ENCODE measurements at regions of chr14 and their contacts with region 1.

Region 1: DNA sequence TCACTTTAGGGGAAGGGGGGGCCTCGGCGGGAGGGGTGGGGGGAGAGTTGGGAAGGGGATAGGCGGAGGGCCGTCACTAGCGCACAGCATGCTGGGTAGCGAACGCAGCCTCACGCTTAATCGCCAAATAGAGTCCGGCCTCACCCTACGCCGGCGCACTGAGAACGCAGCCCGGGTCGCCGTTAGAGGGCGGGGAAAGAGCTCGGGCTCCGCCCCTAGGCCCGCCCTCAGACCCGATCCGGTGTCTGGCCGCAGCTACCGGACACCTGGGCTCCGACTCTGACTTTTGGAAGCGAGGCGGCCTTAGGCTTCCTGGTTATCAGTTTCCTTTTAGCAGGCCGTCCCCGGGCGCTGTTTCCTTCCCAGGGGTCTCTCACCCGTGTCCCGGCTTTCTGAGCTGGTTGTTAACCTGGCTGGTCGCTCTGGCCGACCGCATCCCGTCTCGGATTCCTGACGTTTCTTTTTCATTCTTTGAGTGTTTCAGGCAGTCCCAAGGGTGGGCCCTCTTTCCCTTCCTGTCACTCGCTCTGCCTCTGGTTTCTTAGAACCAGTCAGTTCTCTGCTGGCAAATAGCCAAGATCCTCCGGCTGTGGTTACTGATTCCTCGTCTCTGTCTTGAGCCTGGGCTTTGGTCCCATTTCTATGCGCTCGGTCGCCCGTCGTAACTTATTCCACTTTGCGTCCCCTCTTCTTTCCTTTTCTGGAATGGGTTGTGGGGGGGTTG is 378 bp upstream of the STRN3 start:
- DNase-seq: peak; percentile 75 to 96 (median 88)
- ATAC-seq: peak; percentile 88
- H3K4me3 ChIP-seq: peak overlapping the region; percentile 77 to 99
- H3K4me3 Mint-ChIP-seq: peak overlapping the region; percentile 97
- H3K27ac ChIP-seq: peak overlapping the region; percentile 79 to 93
- H3K27ac Mint-ChIP-seq: peak overlapping the region; percentile 94
- H3K4me1 ChIP-seq: peaks cover 25% of the 10 kb centered on the region
- H3K4me1 Mint-ChIP-seq: peaks cover 47% of the 10 kb centered on the region
- H3K27me3 ChIP-seq: no peaks in the 10 kb centered on the region
- H3K27me3 Mint-ChIP-seq: no peaks in the 10 kb centered on the region
- CTCF ChIP-seq: no peak

Region 2: DNA sequence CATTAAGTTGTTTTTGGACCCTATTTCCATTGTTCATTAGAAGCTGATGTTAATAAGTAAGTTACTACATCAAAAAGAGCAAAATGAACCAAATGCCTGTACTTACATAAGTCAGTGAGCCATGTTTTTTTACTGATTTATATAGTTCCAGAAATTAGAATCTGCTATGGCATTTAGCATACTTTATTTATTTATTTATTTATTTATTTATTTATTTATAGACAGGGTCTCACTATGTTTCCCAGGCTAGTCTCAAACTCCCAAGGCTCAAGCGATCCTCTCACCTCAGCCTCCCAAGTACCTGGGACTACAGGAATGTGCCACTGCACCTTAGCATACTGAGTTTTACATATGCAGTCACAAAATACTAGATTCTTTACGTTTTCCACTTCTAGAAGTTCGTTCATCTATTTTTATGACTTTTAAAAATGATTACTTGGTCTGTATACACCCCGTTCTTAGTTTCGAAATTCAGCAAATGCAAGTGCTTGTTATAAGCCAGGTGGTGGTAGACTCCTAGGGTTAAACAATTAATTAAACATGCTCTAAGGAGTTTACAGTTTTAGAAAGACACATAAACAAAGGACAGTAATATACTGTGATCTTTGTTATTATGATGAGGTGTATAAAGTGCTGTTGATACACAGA is 334.7 kb before region 1 on chr14:
- CTCF ChIA-PET with region 1: no interaction called
- POLR2A ChIA-PET with region 1: no interaction called
- intact Hi-C with region 1: loop called in 1 of 2 experiments (anchors 5 kb)
- DNase-seq: no peak
- ATAC-seq: no peak
- H3K4me3 ChIP-seq: no peak overlapping the region
- H3K4me3 Mint-ChIP-seq: no peak overlapping the region
- H3K27ac ChIP-seq: peak overlapping the region in 1 of 2 experiments; percentile 79
- H3K27ac Mint-ChIP-seq: peak overlapping the region; percentile 88
- H3K4me1 ChIP-seq: peaks cover 8% of the 10 kb centered on the region
- H3K4me1 Mint-ChIP-seq: peaks cover 11% of the 10 kb centered on the region
- H3K27me3 ChIP-seq: no peaks in the 10 kb centered on the region
- H3K27me3 Mint-ChIP-seq: no peaks in the 10 kb centered on the region
- CTCF ChIP-seq: no peak

Region 3: DNA sequence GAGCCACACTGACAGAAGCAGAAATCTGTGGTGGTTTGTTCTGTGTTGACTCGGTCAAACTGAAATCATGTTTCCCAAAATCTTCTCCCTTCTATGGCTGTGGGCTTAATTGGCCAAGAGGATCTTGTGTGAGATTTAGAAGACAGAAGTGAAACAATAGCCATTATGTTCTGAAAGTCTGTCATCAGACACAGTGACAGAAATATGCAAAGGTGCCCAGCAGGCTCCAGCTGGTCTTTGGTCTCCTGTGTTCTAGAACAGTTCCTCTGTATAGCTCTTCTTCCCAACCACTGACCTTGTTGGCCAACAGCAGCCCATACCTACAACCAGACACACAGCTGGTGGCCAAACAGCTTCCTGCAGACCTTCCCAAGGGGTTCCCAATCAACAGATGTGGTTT is 177.2 kb before region 1 on chr14:
- CTCF ChIA-PET with region 1: no interaction called
- POLR2A ChIA-PET with region 1: no interaction called
- intact Hi-C with region 1: no loop called
- DNase-seq: no peak
- ATAC-seq: no peak
- H3K4me3 ChIP-seq: no peak overlapping the region
- H3K4me3 Mint-ChIP-seq: no peak overlapping the region
- H3K27ac ChIP-seq: no peak overlapping the region
- H3K27ac Mint-ChIP-seq: no peak overlapping the region
- H3K4me1 ChIP-seq: no peaks in the 10 kb centered on the region
- H3K4me1 Mint-ChIP-seq: no peaks in the 10 kb centered on the region
- H3K27me3 ChIP-seq: no peaks in the 10 kb centered on the region
- H3K27me3 Mint-ChIP-seq: peaks cover 30% of the 10 kb centered on the region
- CTCF ChIP-seq: no peak

Region 4: GRCh38 chr14:31068235-31068634 is 41.7 kb after region 1 on chr14:
- CTCF ChIA-PET with region 1: no interaction called
- POLR2A ChIA-PET with region 1: no interaction called
- intact Hi-C with region 1: loop called in 1 of 2 experiments (anchors 5 kb)
- DNase-seq: no peak
- ATAC-seq: no peak
- H3K4me3 ChIP-seq: no peak overlapping the region
- H3K4me3 Mint-ChIP-seq: no peak overlapping the region
- H3K27ac ChIP-seq: no peak overlapping the region
- H3K27ac Mint-ChIP-seq: no peak overlapping the region
- H3K4me1 ChIP-seq: no peaks in the 10 kb centered on the region
- H3K4me1 Mint-ChIP-seq: no peaks in the 10 kb centered on the region
- H3K27me3 ChIP-seq: no peaks in the 10 kb centered on the region
- H3K27me3 Mint-ChIP-seq: no peaks in the 10 kb centered on the region
- CTCF ChIP-seq: no peak

Region 5: DNA sequence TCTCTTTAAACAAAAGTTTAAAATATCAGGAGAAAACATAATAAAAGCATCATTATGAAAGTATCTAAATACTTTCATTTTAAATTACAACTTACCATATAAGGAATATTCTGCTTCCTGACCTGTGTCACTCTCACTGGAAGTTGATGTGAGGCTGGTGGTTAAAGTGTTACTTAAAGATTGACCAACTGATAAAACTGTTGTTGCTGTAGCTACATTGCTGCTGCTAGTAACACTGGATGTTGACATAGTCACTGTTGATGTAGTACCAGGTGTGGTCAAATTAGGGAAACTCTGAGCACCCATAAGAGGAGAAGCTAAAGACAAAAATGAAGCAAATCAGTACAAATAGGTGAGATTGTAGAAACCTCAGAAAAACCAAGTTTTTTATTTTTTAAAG is 101.1 kb after region 1 on chr14:
- CTCF ChIA-PET with region 1: interaction called, 3 read pairs
- POLR2A ChIA-PET with region 1: no interaction called
- intact Hi-C with region 1: loop called in 1 of 2 experiments (anchors 5 kb)
- DNase-seq: peak in 6 of 9 experiments; percentile 4 to 93 (median 28)
- ATAC-seq: peak; percentile 85
- H3K4me3 ChIP-seq: no peak overlapping the region
- H3K4me3 Mint-ChIP-seq: no peak overlapping the region
- H3K27ac ChIP-seq: peak overlapping the region in 1 of 2 experiments; percentile 32
- H3K27ac Mint-ChIP-seq: peak overlapping the region; percentile 0
- H3K4me1 ChIP-seq: peaks cover 19% of the 10 kb centered on the region
- H3K4me1 Mint-ChIP-seq: peaks cover 42% of the 10 kb centered on the region
- H3K27me3 ChIP-seq: no peaks in the 10 kb centered on the region
- H3K27me3 Mint-ChIP-seq: no peaks in the 10 kb centered on the region
- CTCF ChIP-seq: no peak

Region 6: DNA sequence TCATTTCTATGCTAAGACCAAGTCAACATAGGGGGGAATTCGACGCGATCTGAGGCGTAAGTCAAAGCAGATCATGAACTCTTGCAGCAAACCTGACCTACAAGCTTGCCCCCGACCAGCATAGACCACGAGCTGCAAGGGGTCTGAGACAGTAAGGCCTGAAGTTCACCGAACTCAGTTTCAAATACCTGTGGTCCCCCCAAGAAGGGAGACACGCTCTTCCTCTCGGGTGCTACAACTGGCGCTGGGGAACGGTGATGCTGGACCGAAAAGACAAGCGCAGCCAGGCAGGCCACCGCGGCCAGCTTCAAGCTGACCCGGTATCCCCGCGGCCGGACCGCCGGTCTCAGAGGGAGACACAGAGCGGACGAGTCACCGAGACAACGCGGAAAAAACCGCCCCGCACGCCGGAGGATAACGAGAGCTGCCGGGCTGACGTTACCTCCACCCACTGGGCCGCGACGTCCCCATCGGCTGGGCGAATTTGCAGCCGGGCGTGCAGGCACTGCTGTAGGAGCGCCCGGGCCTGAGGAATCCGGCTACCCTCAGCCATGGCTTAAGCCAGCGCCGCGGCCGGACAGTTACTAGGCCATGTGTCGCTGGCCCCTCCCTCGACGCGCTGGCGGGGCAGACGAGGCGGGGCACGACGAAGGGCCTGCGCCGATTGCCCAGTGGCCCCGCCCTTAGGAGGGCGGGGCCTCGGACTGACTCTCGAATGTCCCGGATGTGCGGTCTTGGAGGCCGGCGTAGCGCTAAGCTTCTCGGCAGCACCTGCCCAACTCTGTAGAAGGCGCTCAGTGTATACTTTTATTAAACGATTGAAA is 430.5 kb after region 1 on chr14 and contains the start of gene DTD2:
- CTCF ChIA-PET with region 1: no interaction called
- POLR2A ChIA-PET with region 1: no interaction called
- intact Hi-C with region 1: loop called in 1 of 2 experiments (anchors 5 kb)
- DNase-seq: peak; percentile 87 to 95 (median 92)
- ATAC-seq: peak; percentile 98
- H3K4me3 ChIP-seq: peak within 1 kb of the TSS; percentile 93 to 95
- H3K4me3 Mint-ChIP-seq: peak within 1 kb of the TSS; percentile 96
- H3K27ac ChIP-seq: peak within 1 kb of the TSS; percentile 78 to 85
- H3K27ac Mint-ChIP-seq: peak within 1 kb of the TSS; percentile 92
- H3K4me1 ChIP-seq: peaks cover 15% of the 10 kb centered on the region
- H3K4me1 Mint-ChIP-seq: peaks cover 42% of the 10 kb centered on the region
- H3K27me3 ChIP-seq: no peaks in the 10 kb centered on the region
- H3K27me3 Mint-ChIP-seq: peaks cover 2% of the 10 kb centered on the region
- CTCF ChIP-seq: no peak
- total RNA-seq, gene DTD2: 4.9 to 6.5 TPM

Region 7: GRCh38 chr14:32202998-32203882 is 1176.7 kb after region 1 on chr14 and contains the start of gene RNU6-8:
- CTCF ChIA-PET with region 1: no interaction called
- POLR2A ChIA-PET with region 1: no interaction called
- intact Hi-C with region 1: loop called (anchors 2 to 5 kb)
- DNase-seq: peak; percentile 66 to 92 (median 85)
- ATAC-seq: peak; percentile 80
- H3K4me3 ChIP-seq: peak within 1 kb of the TSS; percentile 87 to 92
- H3K4me3 Mint-ChIP-seq: peak within 1 kb of the TSS; percentile 90
- H3K27ac ChIP-seq: peak within 1 kb of the TSS; percentile 99 to 100
- H3K27ac Mint-ChIP-seq: peak within 1 kb of the TSS; percentile 100
- H3K4me1 ChIP-seq: peaks cover 20% of the 10 kb centered on the region
- H3K4me1 Mint-ChIP-seq: peaks cover 29% of the 10 kb centered on the region
- H3K27me3 ChIP-seq: no peaks in the 10 kb centered on the region
- H3K27me3 Mint-ChIP-seq: peaks cover 2% of the 10 kb centered on the region
- CTCF ChIP-seq: no peak
- total RNA-seq, gene RNU6-8: not detected

Measured in CD8-positive, alpha-beta T cell (primary cell).